Colonic mucosa (tissue), 4 donors: ENCODE measurements at regions of chr1 and their contacts with region 1.

Region 1: GRCh38 chr1:46724991-46725735 is 6.2 kb upstream of the EFCAB14 start:
- DNase-seq: peak; percentile 75
- H3K4me3 ChIP-seq: no peak overlapping the region
- H3K27ac ChIP-seq: no peak overlapping the region
- H3K4me1 ChIP-seq: no peaks in the 10 kb centered on the region
- H3K27me3 ChIP-seq: peaks cover 3% of the 10 kb centered on the region
- CTCF ChIP-seq: peak; percentile 71

Region 2: DNA sequence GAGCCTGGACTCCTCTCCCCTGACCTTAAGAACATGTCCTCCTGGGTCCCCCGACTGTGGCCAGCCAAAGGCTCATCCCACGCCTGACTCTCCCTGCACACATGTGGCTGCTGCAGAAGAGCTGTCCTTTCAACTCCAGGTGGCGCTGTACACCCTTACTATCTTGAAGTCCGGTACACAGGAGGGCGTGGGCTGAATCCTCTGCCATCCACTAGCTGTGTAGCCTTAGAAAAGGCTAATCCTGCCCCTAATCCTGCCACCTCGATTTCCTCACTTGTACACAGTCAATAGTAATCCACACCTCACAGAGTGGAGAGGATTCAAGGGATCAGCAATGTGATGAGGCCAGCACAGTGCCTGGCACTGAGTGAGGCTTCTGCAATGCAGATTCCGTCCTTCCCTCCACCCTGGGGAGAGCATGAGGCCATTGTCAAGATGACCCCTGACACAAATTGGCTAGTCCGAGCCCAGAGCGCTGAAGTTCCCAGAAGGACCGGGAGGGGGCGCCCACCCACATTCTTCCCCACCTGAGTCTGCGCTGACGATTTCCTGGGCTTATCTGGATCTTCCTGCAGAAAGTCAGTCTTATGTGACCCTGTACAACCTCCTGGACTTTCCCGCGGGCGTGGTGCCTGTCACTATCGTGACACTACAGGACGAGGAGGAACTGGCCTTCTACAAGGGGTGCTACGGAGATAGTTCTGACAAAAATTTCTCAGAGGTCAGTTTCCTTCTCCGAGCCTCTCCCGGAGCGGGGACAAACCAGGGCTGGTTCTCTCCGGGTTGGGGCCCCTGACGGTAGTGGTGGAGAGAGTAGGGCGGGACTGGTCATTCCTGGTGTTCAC is 282.6 kb before region 1 on chr1:
- intact Hi-C with region 1: loop called (anchors 10 kb)
- DNase-seq: peak; percentile 89
- H3K4me3 ChIP-seq: peak overlapping the region; percentile 12
- H3K27ac ChIP-seq: no peak overlapping the region
- H3K4me1 ChIP-seq: no peaks in the 10 kb centered on the region
- H3K27me3 ChIP-seq: peaks cover 7% of the 10 kb centered on the region
- CTCF ChIP-seq: peak; percentile 98

Region 3: DNA sequence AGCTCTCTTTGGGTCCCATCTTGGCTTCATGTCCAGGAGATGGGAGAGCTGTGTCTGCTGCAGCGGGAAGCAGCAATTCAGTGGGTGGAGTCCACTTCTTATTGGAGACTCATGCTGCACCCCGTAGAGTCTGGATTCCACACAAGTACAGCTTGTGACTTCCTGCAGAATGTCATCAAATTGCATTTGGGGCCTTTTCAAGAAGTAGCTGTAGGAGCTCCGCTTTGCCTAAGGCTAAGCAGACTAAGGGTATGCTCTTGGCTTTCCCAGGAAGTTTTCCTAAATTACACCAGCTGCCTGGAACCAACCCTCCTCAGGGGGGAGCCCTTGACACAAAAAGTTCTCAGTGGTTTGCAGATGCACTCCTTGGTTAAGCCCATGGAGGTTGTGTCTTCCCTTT is 102.8 kb before region 1 on chr1:
- intact Hi-C with region 1: loop called (anchors 1 kb)
- DNase-seq: peak; percentile 68
- H3K4me3 ChIP-seq: no peak overlapping the region
- H3K27ac ChIP-seq: no peak overlapping the region
- H3K4me1 ChIP-seq: no peaks in the 10 kb centered on the region
- H3K27me3 ChIP-seq: no peaks in the 10 kb centered on the region
- CTCF ChIP-seq: peak; percentile 59